ENCODE measurements at regions of chr1 and their contacts with region 1.

Region 1: DNA sequence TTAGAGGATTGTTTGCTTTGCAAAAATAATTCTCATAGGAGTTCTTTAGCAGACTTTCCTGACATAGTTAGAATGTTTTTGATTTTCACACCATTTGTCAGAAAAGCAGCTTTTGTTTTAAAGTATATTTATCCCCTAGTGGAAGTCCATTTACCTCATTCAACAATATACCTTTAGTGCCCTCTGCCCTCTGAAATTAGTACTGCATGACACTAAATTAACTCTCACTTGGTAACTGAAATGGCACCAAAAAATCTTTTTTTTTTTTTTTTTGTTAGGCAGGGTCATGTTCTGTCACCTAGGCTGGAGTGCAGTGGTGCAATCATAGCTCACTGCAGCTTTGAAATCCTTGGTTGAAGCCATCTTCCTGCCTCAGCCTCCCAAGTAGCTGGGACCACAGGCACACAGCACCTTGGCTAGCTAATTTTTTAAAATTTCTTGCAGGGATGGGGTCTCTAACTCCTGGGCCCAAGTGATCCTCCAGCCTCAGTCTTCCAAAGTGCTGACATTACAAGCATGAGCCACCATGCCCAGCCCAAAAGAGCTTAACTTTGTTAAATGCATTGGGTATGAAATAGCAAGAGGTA is 13.6 kb downstream of the LRRC42 start:
- DNase-seq: no peak
- ATAC-seq: 0 out of 2 replicates have a peak, but pooled peaks have one; percentile 31
- H3K4me3 ChIP-seq: no peak overlapping the region
- H3K27ac ChIP-seq: no peak overlapping the region
- H3K4me1 ChIP-seq: peaks cover 26 to 34% of the 10 kb centered on the region in 2 experiments
- H3K27me3 ChIP-seq: no peaks in the 10 kb centered on the region
- CTCF ChIP-seq: peak; percentile 57 to 81 (median 68)
- POLR2A ChIP-seq: no peak
- RAD21 ChIP-seq: peak; percentile 75

Region 2: GRCh38 chr1:53945433-53946251 is 14.1 kb before region 1 on chr1 and contains the start of gene IFT25:
- CTCF ChIA-PET with region 1: interaction called, 19 read pairs
- POLR2A ChIA-PET with region 1: interaction called, 9 read pairs
- RAD21 ChIA-PET with region 1: no interaction called
- intact Hi-C with region 1: no loop called
- DNase-seq: peak; percentile 88
- ATAC-seq: peak; percentile 84
- H3K4me3 ChIP-seq: peak within 1 kb of the TSS; percentile 83 to 87
- H3K27ac ChIP-seq: peak within 1 kb of the TSS; percentile 73
- H3K4me1 ChIP-seq: peaks cover 10 to 30% of the 10 kb centered on the region in 2 experiments; a peak in 3 of 4 replicates
- H3K27me3 ChIP-seq: no peaks in the 10 kb centered on the region
- CTCF ChIP-seq: no peak
- POLR2A ChIP-seq: peak; percentile 60
- RAD21 ChIP-seq: no peak
- total RNA-seq, gene IFT25: 45.1 TPM

Region 3: DNA sequence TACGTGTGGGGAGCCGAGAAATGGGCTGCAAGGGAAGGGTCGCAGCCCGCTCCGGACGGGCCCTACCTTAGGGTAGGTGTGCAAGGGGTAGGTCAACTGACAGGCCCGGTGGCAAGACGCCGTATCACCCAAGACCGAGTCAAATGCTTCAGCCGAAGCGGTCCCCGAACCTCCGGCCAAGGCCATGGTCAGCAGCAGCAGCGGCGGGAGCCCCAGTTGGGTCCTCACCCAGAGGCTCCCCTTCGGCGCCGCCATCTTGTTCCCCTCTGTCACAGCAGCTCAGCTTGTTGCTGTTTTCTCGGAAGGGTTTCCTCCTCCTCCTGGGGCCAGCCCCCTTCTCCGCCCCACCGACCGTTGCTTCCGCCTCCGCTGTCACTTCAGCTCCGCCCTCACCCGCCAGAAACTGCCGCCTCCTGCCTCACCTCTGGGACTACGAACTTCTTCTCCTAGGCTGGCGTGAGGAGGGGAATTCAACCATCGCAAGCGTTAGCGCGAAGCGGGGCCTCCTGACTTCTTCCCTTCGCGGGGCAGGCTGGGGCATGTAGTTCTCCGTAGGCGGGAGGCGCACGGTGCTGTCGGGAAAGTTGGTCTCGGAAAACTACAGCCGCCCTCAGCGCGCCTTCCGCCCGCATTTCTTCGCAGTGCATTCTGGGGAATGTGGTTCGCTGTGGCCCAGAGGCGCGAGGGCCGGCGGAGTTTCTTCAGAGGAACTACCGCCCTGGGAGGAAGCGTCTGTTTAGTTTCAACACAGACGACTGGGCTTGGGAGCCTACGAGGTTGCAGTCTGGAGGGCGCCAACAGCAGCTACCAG is 93.4 kb after region 1 on chr1 and contains the starts of genes TCEANC2 and TMEM59:
- CTCF ChIA-PET with region 1: no interaction called
- POLR2A ChIA-PET with region 1: no interaction called
- RAD21 ChIA-PET with region 1: no interaction called
- intact Hi-C with region 1: loop called (anchors 5 kb)
- DNase-seq: peak; percentile 97
- ATAC-seq: peak; percentile 96
- H3K4me3 ChIP-seq: peak within 1 kb of the TSS; percentile 88 to 94
- H3K27ac ChIP-seq: peak within 1 kb of the TSS; percentile 70
- H3K4me1 ChIP-seq: peaks cover 8 to 18% of the 10 kb centered on the region in 2 experiments; a peak in 3 of 4 replicates
- H3K27me3 ChIP-seq: no peaks in the 10 kb centered on the region
- CTCF ChIP-seq: no peak
- POLR2A ChIP-seq: no peak
- RAD21 ChIP-seq: no peak
- total RNA-seq, gene TCEANC2: 5.4 TPM
- total RNA-seq, gene TMEM59: 121 TPM

Measured in HCT116 (cell line).